H1 (cell line): ENCODE measurements at regions of chr14 and their contacts with region 1.

Region 1: GRCh38 chr14:97251491-97252155 is 454.4 kb downstream of the VRK1 start:
- DNase-seq: peak; percentile 13 to 49
- H3K4me3 ChIP-seq: no peak overlapping the region
- H3K27ac ChIP-seq: no peak overlapping the region
- H3K4me1 ChIP-seq: no peaks in the 10 kb centered on the region
- H3K27me3 ChIP-seq: no peaks in the 10 kb centered on the region
- CTCF ChIP-seq: peak; percentile 40 to 57 (median 53)
- EP300 ChIP-seq: no peak
- POLR2A ChIP-seq: no peak
- RAD21 ChIP-seq: peak; percentile 59 to 66

Region 2: DNA sequence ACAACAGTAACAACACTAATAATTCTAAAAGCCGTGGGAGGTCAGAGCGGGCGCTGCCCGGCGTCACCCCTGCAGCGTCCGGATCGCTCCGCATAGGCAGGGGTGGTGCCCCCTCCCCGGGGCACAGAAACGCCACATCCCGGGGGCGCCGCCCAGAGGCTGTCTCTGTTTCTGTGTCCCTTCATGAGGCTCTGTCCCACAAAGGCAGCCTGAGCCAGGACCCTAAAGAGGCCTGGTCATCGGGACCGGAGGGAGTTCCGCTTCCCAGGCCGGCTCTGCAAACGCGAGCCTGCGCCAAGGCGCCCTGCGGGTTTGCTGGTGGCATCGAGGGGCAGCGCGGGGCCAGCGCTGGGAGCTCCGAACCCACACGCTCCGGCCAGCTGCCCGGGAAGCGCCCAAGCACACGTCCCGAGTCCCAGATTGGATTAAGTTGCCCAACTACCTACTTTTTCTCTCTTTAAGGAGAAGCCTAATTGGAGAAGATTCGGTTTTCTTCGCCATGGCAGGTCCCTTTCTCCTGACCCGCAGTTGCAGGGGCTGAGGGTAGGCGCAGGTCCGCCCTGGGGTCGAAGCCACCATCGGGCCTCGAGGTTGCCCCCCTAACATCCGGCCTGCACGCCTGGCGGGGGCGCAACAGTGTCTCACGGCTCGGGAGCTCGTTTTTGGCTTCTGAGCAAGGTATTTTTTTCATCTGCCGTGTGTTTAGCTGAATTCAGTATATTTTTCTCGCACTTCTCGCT is 32.8 kb before region 1 on chr14:
- CTCF ChIA-PET with region 1: interaction called, 12 read pairs
- POLR2A ChIA-PET with region 1: no interaction called
- DNase-seq: peak; percentile 25 to 78
- H3K4me3 ChIP-seq: peak overlapping the region; percentile 50 to 72 (median 62)
- H3K27ac ChIP-seq: no peak overlapping the region
- H3K4me1 ChIP-seq: peaks cover 4 to 8% (median 6%) of the 10 kb centered on the region in 4 experiments; a peak in 5 of 7 replicates
- H3K27me3 ChIP-seq: peaks cover 0 to 10% (median 6%) of the 10 kb centered on the region in 4 experiments; a peak in 4 of 7 replicates
- CTCF ChIP-seq: peak; percentile 22 to 37 (median 26); a peak in 3 of 4 replicates
- EP300 ChIP-seq: no peak
- POLR2A ChIP-seq: peak in 1 of 2 experiments; percentile 59; a peak in 2 of 3 replicates
- RAD21 ChIP-seq: peak; percentile 23 to 40; a peak in 3 of 4 replicates

Region 3: GRCh38 chr14:97233319-97233985 is 18.2 kb before region 1 on chr14:
- CTCF ChIA-PET with region 1: interaction called, 11 read pairs
- POLR2A ChIA-PET with region 1: no interaction called
- DNase-seq: no peak
- H3K4me3 ChIP-seq: no peak overlapping the region
- H3K27ac ChIP-seq: no peak overlapping the region
- H3K4me1 ChIP-seq: no peaks in the 10 kb centered on the region
- H3K27me3 ChIP-seq: no peaks in the 10 kb centered on the region
- CTCF ChIP-seq: no peak
- EP300 ChIP-seq: no peak
- POLR2A ChIP-seq: no peak
- RAD21 ChIP-seq: no peak